ENCODE measurements at regions of chr12 and their contacts with region 1.

Region 1: DNA sequence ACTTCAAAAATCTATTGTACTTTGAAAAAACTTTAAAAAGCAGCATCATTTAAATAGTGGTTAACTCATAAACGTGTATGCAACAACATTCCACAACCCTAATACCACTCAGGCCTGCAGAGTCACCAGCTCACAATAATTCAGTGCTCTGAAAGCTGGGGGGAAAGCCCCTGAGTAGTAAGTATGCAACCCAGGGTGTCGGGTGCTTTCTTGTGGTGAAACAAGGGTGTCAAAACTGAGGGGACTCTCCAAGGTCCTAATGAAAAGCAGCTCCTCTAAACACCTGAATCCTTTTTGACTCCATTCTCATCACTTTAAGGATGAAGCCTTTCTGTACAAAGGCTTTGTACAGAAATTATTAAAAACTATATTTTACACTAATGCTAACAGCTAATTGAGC is 33.7 kb downstream of the FGFR1OP2 start:
- DNase-seq: peak; percentile 87
- ATAC-seq: peak; percentile 100
- H3K4me3 Mint-ChIP-seq: no peak overlapping the region
- H3K27ac Mint-ChIP-seq: no peak overlapping the region
- H3K4me1 Mint-ChIP-seq: peaks cover 23% of the 10 kb centered on the region
- H3K27me3 Mint-ChIP-seq: no peaks in the 10 kb centered on the region
- CTCF ChIP-seq: no peak

Region 2: GRCh38 chr12:26937875-26938700 is 33.9 kb before region 1 on chr12 and contains the starts of genes FGFR1OP2 and INTS13:
- CTCF ChIA-PET with region 1: interaction called, 3 read pairs
- POLR2A ChIA-PET with region 1: no interaction called
- intact Hi-C with region 1: loop called (anchors 5 kb)
- DNase-seq: peak; percentile 98
- ATAC-seq: peak; percentile 90
- H3K4me3 Mint-ChIP-seq: peak within 1 kb of the TSS; percentile 98
- H3K27ac Mint-ChIP-seq: peak within 1 kb of the TSS; percentile 99
- H3K4me1 Mint-ChIP-seq: peaks cover 50% of the 10 kb centered on the region
- H3K27me3 Mint-ChIP-seq: no peaks in the 10 kb centered on the region
- CTCF ChIP-seq: no peak
- total RNA-seq, gene FGFR1OP2: 72.4 to 75.1 TPM
- total RNA-seq, gene INTS13: 102 to 115 TPM